Mammary epithelial cell (primary cell): ENCODE measurements at regions of chr10 and their contacts with region 1.

Region 1: GRCh38 chr10:96043033-96043932 is at the start of gene CCNJ:
- DNase-seq: peak; percentile 87
- H3K4me3 ChIP-seq: peak within 1 kb of the TSS; percentile 77 to 94 (median 83)
- H3K27ac ChIP-seq: peak within 1 kb of the TSS; percentile 70
- H3K4me1 ChIP-seq: peaks cover 12% of the 10 kb centered on the region
- H3K27me3 ChIP-seq: no peaks in the 10 kb centered on the region
- CTCF ChIP-seq: no peak
- total RNA-seq, gene CCNJ: 6.9 to 7.5 TPM

Region 2: DNA sequence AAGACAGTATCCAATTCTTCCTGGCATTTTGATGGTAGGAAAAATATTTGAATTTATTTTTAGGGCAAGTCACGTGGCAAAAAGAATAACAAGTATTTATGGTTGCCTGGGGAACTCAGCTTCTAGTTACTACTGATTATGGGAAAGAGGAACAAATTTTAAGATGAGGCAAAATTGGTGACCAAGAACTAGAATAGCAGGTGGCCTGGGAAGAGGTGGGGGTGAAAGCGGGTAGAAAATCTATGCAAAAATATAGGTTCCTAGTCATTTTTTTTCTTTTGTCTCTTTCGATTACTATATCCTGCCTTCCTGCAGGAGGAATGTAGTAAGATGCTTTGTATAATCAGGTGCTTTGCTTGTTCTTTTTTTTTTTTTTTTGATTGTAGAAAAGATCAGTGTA is 259.5 kb before region 1 on chr10:
- CTCF ChIA-PET with region 1: no interaction called
- dilution Hi-C with region 1: no loop called
- in situ Hi-C with region 1: no loop called
- intact Hi-C with region 1: no loop called
- DNase-seq: no peak
- H3K4me3 ChIP-seq: no peak overlapping the region
- H3K27ac ChIP-seq: no peak overlapping the region
- H3K4me1 ChIP-seq: no peaks in the 10 kb centered on the region
- H3K27me3 ChIP-seq: peaks cover 2% of the 10 kb centered on the region
- CTCF ChIP-seq: no peak

Region 3: DNA sequence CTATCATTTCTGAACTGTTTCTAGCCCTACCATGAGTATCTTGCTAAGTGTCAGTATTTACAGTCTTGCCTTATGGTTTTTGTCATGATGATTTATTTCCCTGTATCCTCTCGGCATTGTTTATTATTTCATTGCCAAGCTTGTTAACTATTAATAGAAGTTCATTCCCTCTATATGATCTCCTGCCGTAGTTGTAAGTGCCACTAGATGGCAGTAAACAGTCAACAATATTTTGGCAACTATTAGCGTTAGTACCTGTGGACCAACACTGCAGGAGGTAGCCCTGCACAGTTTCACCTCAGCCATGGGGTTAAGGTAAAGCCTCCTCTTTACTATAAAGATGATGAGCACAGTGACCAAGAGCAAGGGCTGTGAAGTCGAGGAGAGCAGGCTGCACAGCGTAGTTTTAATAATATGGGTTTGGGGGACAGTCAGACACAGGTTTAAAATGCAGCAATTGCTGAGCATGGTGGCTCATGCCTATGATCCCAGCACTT is 26.0 kb before region 1 on chr10:
- CTCF ChIA-PET with region 1: no interaction called
- dilution Hi-C with region 1: no loop called
- in situ Hi-C with region 1: no loop called
- intact Hi-C with region 1: no loop called
- DNase-seq: peak; percentile 52
- H3K4me3 ChIP-seq: no peak overlapping the region
- H3K27ac ChIP-seq: no peak overlapping the region
- H3K4me1 ChIP-seq: no peaks in the 10 kb centered on the region
- H3K27me3 ChIP-seq: peaks cover 7% of the 10 kb centered on the region
- CTCF ChIP-seq: peak; percentile 73 to 75

Region 4: GRCh38 chr10:96089670-96090462 is 46.6 kb after region 1 on chr10:
- CTCF ChIA-PET with region 1: no interaction called
- dilution Hi-C with region 1: no loop called
- in situ Hi-C with region 1: no loop called
- intact Hi-C with region 1: loop called (anchors 2 kb)
- DNase-seq: peak; percentile 93
- H3K4me3 ChIP-seq: peak overlapping the region; percentile 59 to 89 (median 69)
- H3K27ac ChIP-seq: peak overlapping the region; percentile 95
- H3K4me1 ChIP-seq: peaks cover 3% of the 10 kb centered on the region
- H3K27me3 ChIP-seq: no peaks in the 10 kb centered on the region
- CTCF ChIP-seq: no peak

Region 5: DNA sequence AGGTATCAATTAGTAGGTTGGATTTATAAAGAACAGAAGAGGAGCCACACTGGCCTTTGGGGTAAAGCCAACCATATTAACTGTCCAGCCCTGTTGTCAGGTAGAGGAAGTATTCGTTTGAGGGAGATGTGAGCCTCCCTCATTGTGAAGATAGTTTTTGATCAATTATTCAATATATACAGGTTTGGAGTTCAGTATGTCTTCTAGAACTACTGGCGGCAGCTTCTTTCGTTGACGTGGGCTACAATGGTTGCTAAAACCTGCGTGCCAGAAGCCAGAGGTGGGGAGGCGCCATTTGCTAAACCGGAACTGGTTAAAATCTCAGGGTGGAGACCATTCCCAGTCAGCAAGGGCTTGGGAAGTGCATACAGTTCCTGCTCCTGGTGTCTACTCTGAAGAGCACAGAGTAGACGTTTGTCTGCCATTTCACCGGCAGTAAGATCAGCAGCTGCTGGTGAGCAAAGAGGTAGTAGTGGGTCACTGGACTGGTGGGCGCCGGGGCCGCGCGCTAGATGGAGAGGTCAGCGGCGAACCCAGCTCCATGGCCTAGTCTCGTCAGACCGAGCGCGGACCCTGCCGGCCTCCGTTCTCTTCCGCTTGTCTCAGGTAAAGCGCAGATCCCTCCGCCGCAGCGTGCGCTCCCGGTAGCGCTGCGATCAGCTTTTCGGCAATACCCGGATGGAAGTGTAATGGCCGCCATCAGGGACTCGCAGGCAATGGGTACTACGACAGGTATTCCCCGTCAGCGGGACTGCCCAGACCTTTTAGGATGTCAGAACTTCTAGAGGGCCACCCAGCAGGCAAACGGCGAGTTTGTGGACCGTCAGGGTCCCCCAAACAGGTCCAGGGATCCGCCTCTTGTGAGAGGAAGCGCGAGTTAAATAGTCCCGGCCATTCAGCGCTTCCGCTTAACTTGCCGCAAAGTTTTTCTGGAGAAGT is 86.4 kb after region 1 on chr10 and contains the start of gene ZNF518A:
- CTCF ChIA-PET with region 1: no interaction called
- dilution Hi-C with region 1: no loop called
- in situ Hi-C with region 1: no loop called
- intact Hi-C with region 1: loop called (anchors 2 kb)
- DNase-seq: peak; percentile 95
- H3K4me3 ChIP-seq: peak within 1 kb of the TSS; percentile 66 to 97 (median 81)
- H3K27ac ChIP-seq: peak within 1 kb of the TSS; percentile 98
- H3K4me1 ChIP-seq: peaks cover 17% of the 10 kb centered on the region
- H3K27me3 ChIP-seq: no peaks in the 10 kb centered on the region
- CTCF ChIP-seq: no peak
- total RNA-seq, gene ZNF518A: 17.3 to 20.3 TPM

Region 6: GRCh38 chr10:96280859-96281258 is 237.6 kb after region 1 on chr10:
- CTCF ChIA-PET with region 1: no interaction called
- dilution Hi-C with region 1: no loop called
- in situ Hi-C with region 1: no loop called
- intact Hi-C with region 1: loop called (anchors 5 kb)
- DNase-seq: peak; percentile 82
- H3K4me3 ChIP-seq: no peak overlapping the region
- H3K27ac ChIP-seq: no peak overlapping the region
- H3K4me1 ChIP-seq: peaks cover 41% of the 10 kb centered on the region
- H3K27me3 ChIP-seq: no peaks in the 10 kb centered on the region
- CTCF ChIP-seq: no peak